Ascending aorta (tissue), 2 donors: ENCODE measurements at regions of chr7 and their contacts with region 1.

Region 1: GRCh38 chr7:100611974-100612729 is at the start of gene MOSPD3:
- DNase-seq: peak; percentile 95 to 100
- H3K4me3 ChIP-seq: peak within 1 kb of the TSS; percentile 84 to 93
- H3K27ac ChIP-seq: peak within 1 kb of the TSS; percentile 86 to 88
- H3K4me1 ChIP-seq: peaks cover 3 to 11% of the 10 kb centered on the region in 2 donors
- H3K27me3 ChIP-seq: no peaks in the 10 kb centered on the region
- CTCF ChIP-seq: no peak
- total RNA-seq, gene MOSPD3: 11.0 TPM

Region 2: GRCh38 chr7:100435401-100436304 is 176.5 kb before region 1 on chr7:
- intact Hi-C with region 1: loop called (anchors 5 kb)
- DNase-seq: peak in 1 of 2 donors; percentile 68
- H3K4me3 ChIP-seq: peak overlapping the region; percentile 90
- H3K27ac ChIP-seq: peak overlapping the region; percentile 96 to 98
- H3K4me1 ChIP-seq: peaks cover 4 to 27% of the 10 kb centered on the region in 2 donors
- H3K27me3 ChIP-seq: no peaks in the 10 kb centered on the region
- CTCF ChIP-seq: no peak

Region 3: DNA sequence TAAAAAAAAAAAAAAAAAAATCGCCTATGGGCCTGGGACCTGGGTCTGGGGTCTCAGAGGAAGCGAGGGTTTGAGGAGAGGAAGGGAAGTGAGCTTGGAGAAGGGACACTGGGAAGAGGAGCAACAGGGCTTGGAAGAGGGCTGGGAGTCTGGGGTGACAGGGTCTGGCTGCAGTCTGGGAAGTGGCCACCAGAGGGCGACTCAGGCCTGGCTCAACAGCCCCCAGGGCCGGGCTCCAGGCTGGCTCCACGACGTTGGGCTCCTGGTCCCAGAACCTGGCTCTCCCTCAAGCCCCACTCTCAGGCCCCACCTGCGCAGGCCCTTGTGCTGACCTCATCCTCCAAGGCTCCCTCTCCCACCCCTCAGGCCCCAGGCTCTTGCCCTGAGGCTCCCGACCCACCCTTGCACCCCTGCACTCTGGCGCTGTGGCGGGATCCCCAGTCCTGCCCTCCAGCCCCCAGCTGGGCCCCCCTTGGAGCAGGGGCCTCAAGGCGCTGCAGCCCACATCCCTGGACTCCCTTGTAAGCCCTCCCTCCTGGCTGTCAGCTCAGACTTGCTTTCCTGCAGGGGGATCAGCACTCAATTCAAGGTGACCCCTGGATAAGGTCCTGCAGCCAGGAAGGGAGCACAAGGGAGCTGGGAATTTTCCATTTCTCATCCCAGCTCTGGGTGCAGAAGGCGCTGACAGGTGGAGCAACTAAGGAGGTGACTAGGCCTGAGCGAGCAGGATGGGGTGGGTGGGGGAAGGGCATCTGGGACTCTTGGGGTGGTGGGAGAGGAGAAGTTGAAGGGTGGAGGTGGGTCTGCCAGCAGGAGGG is 142.7 kb before region 1 on chr7:
- intact Hi-C with region 1: loop called (anchors 5 kb)
- DNase-seq: peak in 1 of 2 donors; percentile 90
- H3K4me3 ChIP-seq: no peak overlapping the region
- H3K27ac ChIP-seq: no peak overlapping the region
- H3K4me1 ChIP-seq: peaks cover 17 to 26% of the 10 kb centered on the region in 2 donors
- H3K27me3 ChIP-seq: no peaks in the 10 kb centered on the region
- CTCF ChIP-seq: peak; percentile 87 to 97 (median 95)

Region 4: GRCh38 chr7:100538654-100539435 is 73.3 kb before region 1 on chr7 and contains the start of gene AGFG2:
- intact Hi-C with region 1: loop called (anchors 2 kb)
- DNase-seq: peak; percentile 100
- H3K4me3 ChIP-seq: peak within 1 kb of the TSS; percentile 97 to 98
- H3K27ac ChIP-seq: peak within 1 kb of the TSS; percentile 71 to 79
- H3K4me1 ChIP-seq: peaks cover 1 to 20% of the 10 kb centered on the region in 2 donors
- H3K27me3 ChIP-seq: no peaks in the 10 kb centered on the region
- CTCF ChIP-seq: no peak
- total RNA-seq, gene AGFG2: 30.0 TPM

Region 5: DNA sequence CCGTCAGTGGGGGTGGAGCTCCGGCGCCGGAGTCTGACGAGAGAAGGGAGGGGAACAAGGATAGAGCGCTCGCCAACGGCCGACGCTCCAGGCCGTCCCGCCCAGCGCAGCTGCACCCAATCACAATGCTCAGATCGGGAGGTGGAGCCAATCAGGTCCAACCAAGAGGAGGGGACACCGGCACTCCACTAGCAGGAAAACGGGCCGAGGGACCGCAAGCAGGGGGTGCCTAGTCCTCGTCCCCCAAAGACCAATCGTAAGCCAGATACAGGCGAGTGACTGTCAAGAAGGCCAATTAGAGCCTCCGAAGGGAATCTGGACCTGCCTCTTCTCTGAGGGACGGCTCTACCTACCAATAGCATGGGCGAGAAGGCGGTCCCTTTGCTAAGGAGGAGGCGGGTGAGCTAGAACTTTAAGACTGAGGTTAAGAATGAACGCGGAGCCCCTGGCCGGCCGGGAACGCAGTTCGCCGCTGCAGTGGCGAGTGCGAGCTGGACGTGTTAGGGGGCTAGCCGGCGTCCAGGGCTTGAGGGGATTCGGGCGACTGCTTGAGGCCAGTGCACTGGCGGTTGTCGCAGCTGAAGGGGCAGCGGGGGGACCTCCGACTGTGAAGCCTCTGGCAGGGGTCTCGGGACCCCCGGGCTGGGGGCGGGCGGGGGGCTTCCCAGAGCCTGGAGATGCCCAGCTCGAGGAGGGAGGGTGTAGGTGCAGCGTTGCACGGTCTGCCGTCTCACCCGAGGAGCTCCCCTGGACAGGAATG is 25.7 kb before region 1 on chr7 and contains the start of gene FBXO24:
- intact Hi-C with region 1: loop called (anchors 1 kb)
- DNase-seq: peak; percentile 99 to 100
- H3K4me3 ChIP-seq: peak within 1 kb of the TSS; percentile 82 to 84
- H3K27ac ChIP-seq: peak within 1 kb of the TSS; percentile 84 to 87
- H3K4me1 ChIP-seq: peaks cover 0 to 25% of the 10 kb centered on the region in 2 donors
- H3K27me3 ChIP-seq: no peaks in the 10 kb centered on the region
- CTCF ChIP-seq: no peak
- total RNA-seq, gene FBXO24: not detected

Region 6: GRCh38 chr7:100874577-100875355 is 262.6 kb after region 1 on chr7 and contains the start of gene SRRT:
- intact Hi-C with region 1: no loop called
- DNase-seq: peak; percentile 88 to 99
- H3K4me3 ChIP-seq: peak within 1 kb of the TSS; percentile 91 to 98
- H3K27ac ChIP-seq: peak within 1 kb of the TSS; percentile 88 to 98
- H3K4me1 ChIP-seq: peaks cover 13 to 33% of the 10 kb centered on the region in 2 donors
- H3K27me3 ChIP-seq: no peaks in the 10 kb centered on the region
- CTCF ChIP-seq: peak in 2 of 3 experiments; percentile 41 to 82
- total RNA-seq, gene SRRT: 89.2 TPM